K562 (cell line): ENCODE measurements at regions of chr6 and their contacts with region 1.

Region 1: GRCh38 chr6:86856937-86857563 is 80.3 kb upstream of the HTR1E start:
- DNase-seq: peak; percentile 10 to 40 (median 33)
- ATAC-seq: no peak
- H3K4me3 ChIP-seq: no peak overlapping the region
- H3K27ac ChIP-seq: no peak overlapping the region
- H3K4me1 ChIP-seq: no peaks in the 10 kb centered on the region
- H3K27me3 ChIP-seq: no peaks in the 10 kb centered on the region
- CTCF ChIP-seq: peak; percentile 36 to 63 (median 60); a peak in 5 of 6 replicates
- EP300 ChIP-seq: no peak
- POLR2A ChIP-seq: no peak
- RAD21 ChIP-seq: peak; percentile 73 to 75

Region 2: GRCh38 chr6:85923013-85923430 is 934.0 kb before region 1 on chr6:
- CTCF ChIA-PET with region 1: interaction called, 3 read pairs
- POLR2A ChIA-PET with region 1: interaction called, 4 read pairs
- in situ Hi-C with region 1: no loop called
- intact Hi-C with region 1: loop called (anchors 10 kb)
- DNase-seq: peak in 2 of 4 experiments; percentile 17 to 36
- ATAC-seq: peak; percentile 79
- H3K4me3 ChIP-seq: no peak overlapping the region
- H3K27ac ChIP-seq: no peak overlapping the region
- H3K4me1 ChIP-seq: no peaks in the 10 kb centered on the region
- H3K27me3 ChIP-seq: no peaks in the 10 kb centered on the region
- CTCF ChIP-seq: peak; percentile 51 to 70 (median 60); a peak in 5 of 6 replicates
- EP300 ChIP-seq: no peak
- POLR2A ChIP-seq: no peak
- RAD21 ChIP-seq: peak; percentile 66 to 75

Region 3: GRCh38 chr6:86440608-86441007 is 416.4 kb before region 1 on chr6:
- CTCF ChIA-PET with region 1: no interaction called
- POLR2A ChIA-PET with region 1: no interaction called
- in situ Hi-C with region 1: no loop called
- intact Hi-C with region 1: no loop called
- DNase-seq: no peak
- ATAC-seq: no peak
- H3K4me3 ChIP-seq: no peak overlapping the region
- H3K27ac ChIP-seq: no peak overlapping the region
- H3K4me1 ChIP-seq: no peaks in the 10 kb centered on the region
- H3K27me3 ChIP-seq: no peaks in the 10 kb centered on the region
- CTCF ChIP-seq: no peak
- EP300 ChIP-seq: no peak
- POLR2A ChIP-seq: no peak
- RAD21 ChIP-seq: no peak

Region 4: DNA sequence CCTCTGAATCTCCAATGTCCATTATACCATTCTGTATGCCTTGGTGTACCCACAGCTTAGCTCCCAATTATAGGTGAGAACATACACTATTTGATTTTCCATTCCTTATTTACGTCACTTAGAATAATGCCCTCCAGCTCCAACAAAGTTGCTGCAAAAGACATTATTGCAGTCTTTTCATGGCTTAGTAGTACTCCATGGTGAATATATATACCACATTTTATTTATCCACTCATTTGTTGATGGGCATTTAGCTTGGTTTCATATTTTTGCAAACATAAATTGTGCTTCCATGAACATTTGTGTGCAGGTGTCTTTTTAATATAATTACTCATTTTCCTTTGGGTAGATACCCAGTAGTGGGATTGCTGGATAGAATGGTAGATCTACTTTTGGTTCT is 293.9 kb before region 1 on chr6:
- CTCF ChIA-PET with region 1: no interaction called
- POLR2A ChIA-PET with region 1: no interaction called
- in situ Hi-C with region 1: loop called (anchors 10 kb)
- intact Hi-C with region 1: no loop called
- DNase-seq: no peak
- ATAC-seq: no peak
- H3K4me3 ChIP-seq: no peak overlapping the region
- H3K27ac ChIP-seq: no peak overlapping the region
- H3K4me1 ChIP-seq: no peaks in the 10 kb centered on the region
- H3K27me3 ChIP-seq: no peaks in the 10 kb centered on the region
- CTCF ChIP-seq: no peak
- EP300 ChIP-seq: no peak
- POLR2A ChIP-seq: no peak
- RAD21 ChIP-seq: no peak

Region 5: DNA sequence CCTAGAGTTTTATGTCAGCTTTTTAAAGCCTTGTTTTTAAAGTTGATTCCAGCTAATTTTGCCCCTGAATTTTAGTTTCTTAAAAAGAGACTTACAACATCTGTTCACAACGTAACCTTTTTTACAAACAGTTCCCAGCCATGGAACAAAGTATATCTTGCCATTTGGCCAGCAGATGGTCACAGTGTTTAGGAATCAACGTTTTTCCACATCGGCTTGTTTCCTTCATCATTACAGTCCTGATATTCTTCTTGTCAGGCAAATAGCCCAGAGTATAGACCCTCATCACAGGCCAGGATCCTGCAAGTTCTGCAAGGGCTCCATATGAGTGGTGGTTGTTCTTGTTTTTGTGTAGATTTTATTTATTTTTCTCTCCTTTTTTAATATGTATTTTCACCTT is 261.4 kb before region 1 on chr6:
- CTCF ChIA-PET with region 1: no interaction called
- POLR2A ChIA-PET with region 1: no interaction called
- in situ Hi-C with region 1: no loop called
- intact Hi-C with region 1: loop called (anchors 5 kb)
- DNase-seq: no peak
- ATAC-seq: peak; percentile 68
- H3K4me3 ChIP-seq: no peak overlapping the region
- H3K27ac ChIP-seq: no peak overlapping the region
- H3K4me1 ChIP-seq: no peaks in the 10 kb centered on the region; a peak in 1 of 5 replicates
- H3K27me3 ChIP-seq: no peaks in the 10 kb centered on the region
- CTCF ChIP-seq: peak in 1 of 3 experiments; percentile 34; a peak in 1 of 6 replicates
- EP300 ChIP-seq: no peak
- POLR2A ChIP-seq: no peak
- RAD21 ChIP-seq: peak in 1 of 2 experiments; percentile 24; a peak in 1 of 4 replicates